ENCODE measurements at regions of chr15 and their contacts with region 1.

Region 1: DNA sequence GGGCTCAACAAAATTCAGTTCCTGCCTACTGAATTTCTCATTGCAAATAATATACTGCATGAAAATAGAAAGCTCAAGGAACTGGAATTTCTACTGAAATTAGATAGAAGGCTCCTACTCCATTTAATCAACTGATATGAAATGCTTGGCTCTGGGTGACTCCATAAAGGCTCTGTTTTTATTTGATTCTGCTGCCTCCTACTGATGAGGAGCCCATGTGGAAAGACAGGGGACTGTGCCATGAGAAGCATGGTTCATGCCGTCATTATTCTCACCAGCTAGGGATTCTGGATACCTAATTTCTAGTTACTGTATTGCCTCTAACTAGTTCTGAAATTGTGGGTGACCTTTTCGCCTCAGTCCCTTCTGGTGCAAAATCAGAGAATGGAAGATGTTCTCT is 366.2 kb upstream of the DPH6 start:
- DNase-seq: no peak
- H3K4me3 ChIP-seq: no peak overlapping the region
- H3K27ac ChIP-seq: no peak overlapping the region
- H3K4me1 ChIP-seq: no peaks in the 10 kb centered on the region
- H3K27me3 ChIP-seq: no peaks in the 10 kb centered on the region
- CTCF ChIP-seq: no peak

Region 2: DNA sequence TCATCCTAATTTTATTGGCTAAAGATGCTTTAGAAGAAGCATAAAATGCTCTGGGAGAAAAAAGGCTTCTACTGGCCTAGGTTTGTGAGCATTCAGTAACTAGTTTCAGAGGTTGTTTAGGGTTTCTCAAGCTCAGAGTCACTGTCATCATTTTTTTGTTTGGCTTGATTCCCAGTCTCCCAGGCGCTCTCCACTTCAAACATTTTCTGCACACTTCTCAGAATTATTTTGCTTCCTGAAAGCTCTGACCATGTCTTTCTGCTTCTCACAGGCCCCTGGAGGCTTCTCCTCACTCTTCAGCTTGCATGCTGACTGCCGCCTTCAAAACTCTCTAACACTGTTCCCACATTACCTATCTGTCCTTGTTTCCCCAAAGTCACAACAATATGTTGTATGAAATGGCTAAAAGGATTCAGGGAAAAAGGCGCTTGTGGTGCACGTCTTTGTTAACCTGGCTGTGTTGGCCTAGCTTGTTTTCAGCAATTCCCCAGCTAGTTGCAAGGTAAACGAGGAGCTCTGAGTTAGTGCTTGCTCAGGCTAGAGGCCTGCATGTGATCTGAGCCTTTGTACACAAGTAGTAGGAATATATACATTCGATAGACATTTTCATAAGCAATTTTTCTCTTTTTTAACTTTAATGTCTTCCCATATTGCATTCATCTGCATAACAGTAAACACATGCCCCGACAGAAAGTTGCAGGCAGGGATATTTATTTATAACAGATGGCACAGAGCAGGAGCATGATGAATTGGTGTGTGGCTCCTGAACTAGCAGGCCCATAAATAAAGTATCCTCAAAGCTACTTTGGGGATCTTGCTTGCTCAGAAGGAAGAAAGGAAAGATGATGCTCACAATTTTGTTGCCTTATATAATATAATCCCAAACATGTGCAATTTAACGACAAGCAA is 237.1 kb before region 1 on chr15:
- CTCF ChIA-PET with region 1: no interaction called
- POLR2A ChIA-PET with region 1: no interaction called
- intact Hi-C with region 1: no loop called
- DNase-seq: no peak
- H3K4me3 ChIP-seq: no peak overlapping the region
- H3K27ac ChIP-seq: no peak overlapping the region
- H3K4me1 ChIP-seq: no peaks in the 10 kb centered on the region
- H3K27me3 ChIP-seq: no peaks in the 10 kb centered on the region
- CTCF ChIP-seq: no peak

Region 3: GRCh38 chr15:35944945-35945585 is 32.9 kb after region 1 on chr15:
- CTCF ChIA-PET with region 1: no interaction called
- POLR2A ChIA-PET with region 1: no interaction called
- intact Hi-C with region 1: loop called (anchors 1 kb)
- DNase-seq: no peak
- H3K4me3 ChIP-seq: no peak overlapping the region
- H3K27ac ChIP-seq: no peak overlapping the region
- H3K4me1 ChIP-seq: no peaks in the 10 kb centered on the region
- H3K27me3 ChIP-seq: no peaks in the 10 kb centered on the region
- CTCF ChIP-seq: no peak